A673 (cell line): ENCODE measurements at regions of chr17 and their contacts with region 1.

Region 1: DNA sequence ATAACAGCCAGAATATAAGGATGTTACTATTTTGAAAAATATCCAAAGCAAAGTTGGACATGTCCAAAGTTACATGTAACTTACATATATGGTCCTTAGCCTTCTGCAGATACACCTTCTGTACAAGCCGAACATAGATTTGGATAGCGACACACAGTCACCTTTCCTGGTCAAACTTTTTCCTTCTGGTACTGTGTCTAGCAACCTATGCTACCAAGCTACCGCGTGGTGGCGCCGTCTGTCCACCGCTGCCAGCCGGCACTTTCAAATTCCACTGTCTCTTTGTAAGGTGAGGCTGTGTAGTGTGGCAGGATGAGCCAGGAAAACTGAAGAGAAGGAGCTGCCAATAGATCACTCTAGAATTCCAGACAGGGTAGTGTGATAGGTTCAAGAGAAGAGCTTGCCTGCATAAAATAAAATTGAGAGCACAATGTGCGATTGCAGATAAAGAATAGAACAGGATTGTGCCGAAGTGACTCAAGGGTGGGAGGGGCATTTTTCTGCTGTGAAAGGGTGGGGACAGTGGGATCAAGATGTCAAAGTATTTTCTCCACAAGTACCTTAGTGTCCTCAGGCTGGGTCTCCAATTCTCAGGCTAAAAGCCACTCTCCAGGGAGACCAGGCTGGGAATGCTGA is 366.9 kb downstream of the SLC39A11 start:
- DNase-seq: peak; percentile 60
- H3K4me3 ChIP-seq: no peak overlapping the region
- H3K27ac ChIP-seq: no peak overlapping the region
- H3K4me1 ChIP-seq: no peaks in the 10 kb centered on the region
- H3K27me3 ChIP-seq: no peaks in the 10 kb centered on the region
- CTCF ChIP-seq: peak; percentile 89

Region 2: DNA sequence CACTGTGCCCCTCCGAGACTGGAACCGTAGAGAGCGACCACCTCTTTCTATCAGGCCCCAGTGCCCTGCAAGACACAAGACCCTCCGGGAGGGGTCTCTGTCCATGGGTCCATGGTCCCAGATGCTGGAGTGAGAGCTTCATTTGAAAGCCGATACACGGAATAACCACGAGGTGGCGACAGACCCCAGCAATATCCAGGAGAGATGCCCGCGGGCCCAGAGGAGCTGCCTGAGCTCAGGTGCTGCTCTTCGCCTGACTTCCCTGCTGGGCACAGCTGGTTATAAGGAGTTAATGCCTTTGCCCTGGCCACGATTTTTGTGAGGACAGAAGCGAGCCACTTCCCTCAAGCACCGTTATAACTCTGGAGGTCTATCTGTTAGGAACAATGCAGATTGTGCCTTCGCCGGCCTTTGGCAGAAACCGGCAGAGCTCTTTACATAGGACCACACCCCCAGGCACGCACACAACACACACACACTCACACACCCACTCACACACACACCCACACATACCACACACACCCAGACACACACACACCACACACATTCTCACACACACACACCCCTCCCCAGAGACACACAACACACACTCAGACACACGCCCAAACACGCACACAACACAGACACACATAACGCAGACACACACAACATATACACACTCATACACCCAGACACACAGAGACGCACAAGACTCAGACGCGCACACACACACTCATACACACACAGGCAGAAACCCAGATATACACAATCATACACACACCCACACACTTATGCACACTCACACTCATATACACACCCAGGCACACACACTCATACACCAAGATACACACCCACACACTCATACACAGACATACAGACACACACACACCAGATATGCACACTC is 168.4 kb before region 1 on chr17:
- CTCF ChIA-PET with region 1: interaction called, 8 read pairs
- POLR2A ChIA-PET with region 1: no interaction called
- intact Hi-C with region 1: loop called (anchors 5 kb)
- DNase-seq: peak; percentile 75
- H3K4me3 ChIP-seq: no peak overlapping the region
- H3K27ac ChIP-seq: no peak overlapping the region
- H3K4me1 ChIP-seq: no peaks in the 10 kb centered on the region
- H3K27me3 ChIP-seq: no peaks in the 10 kb centered on the region
- CTCF ChIP-seq: peak; percentile 93

Region 3: GRCh38 chr17:72872396-72872795 is 146.8 kb after region 1 on chr17:
- CTCF ChIA-PET with region 1: no interaction called
- POLR2A ChIA-PET with region 1: no interaction called
- intact Hi-C with region 1: no loop called
- DNase-seq: no peak
- H3K4me3 ChIP-seq: no peak overlapping the region
- H3K27ac ChIP-seq: no peak overlapping the region
- H3K4me1 ChIP-seq: no peaks in the 10 kb centered on the region
- H3K27me3 ChIP-seq: no peaks in the 10 kb centered on the region
- CTCF ChIP-seq: no peak

Region 4: DNA sequence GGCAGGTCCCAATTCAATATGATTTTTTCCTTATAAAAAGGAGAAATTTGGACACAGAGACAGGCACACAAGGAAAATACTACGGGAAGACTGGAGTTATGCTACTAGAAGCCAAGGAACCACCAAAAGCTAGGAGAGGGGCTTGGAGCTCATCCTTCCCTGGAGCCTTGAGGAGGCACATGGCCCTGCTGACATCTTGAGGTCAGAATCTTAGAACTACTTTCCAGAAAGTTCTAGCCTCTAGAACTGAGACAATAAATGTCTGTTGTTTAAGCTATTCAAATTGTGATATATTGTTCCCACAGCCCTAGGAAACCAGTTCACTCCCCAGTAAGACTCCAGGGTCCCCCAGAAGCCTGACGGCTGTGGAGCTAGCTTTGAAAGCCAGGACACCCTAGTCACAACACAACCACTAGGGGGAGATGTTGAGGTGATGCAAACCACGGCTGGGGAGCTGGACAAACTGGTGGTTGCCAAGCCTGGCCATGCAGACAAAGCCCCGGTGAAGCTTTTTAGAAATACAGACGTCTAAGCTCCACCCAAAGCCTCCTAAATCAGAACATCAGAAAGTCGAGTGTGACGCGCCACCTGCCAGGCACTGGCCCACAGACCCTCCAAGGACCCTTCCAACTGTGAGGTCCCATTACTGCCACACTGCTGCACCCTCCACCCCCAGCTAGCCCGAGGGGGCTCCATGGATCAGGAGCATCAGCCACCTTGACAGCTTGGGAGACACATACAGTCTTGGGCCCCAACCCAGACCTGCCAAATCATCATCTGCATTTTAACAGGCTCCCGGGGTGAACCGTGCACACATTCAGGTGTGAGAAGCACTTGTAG is 260.6 kb after region 1 on chr17:
- CTCF ChIA-PET with region 1: interaction called, 4 read pairs
- POLR2A ChIA-PET with region 1: no interaction called
- intact Hi-C with region 1: loop called (anchors 5 kb)
- DNase-seq: peak; percentile 85
- H3K4me3 ChIP-seq: no peak overlapping the region
- H3K27ac ChIP-seq: no peak overlapping the region
- H3K4me1 ChIP-seq: no peaks in the 10 kb centered on the region
- H3K27me3 ChIP-seq: no peaks in the 10 kb centered on the region
- CTCF ChIP-seq: peak; percentile 93

Region 5: DNA sequence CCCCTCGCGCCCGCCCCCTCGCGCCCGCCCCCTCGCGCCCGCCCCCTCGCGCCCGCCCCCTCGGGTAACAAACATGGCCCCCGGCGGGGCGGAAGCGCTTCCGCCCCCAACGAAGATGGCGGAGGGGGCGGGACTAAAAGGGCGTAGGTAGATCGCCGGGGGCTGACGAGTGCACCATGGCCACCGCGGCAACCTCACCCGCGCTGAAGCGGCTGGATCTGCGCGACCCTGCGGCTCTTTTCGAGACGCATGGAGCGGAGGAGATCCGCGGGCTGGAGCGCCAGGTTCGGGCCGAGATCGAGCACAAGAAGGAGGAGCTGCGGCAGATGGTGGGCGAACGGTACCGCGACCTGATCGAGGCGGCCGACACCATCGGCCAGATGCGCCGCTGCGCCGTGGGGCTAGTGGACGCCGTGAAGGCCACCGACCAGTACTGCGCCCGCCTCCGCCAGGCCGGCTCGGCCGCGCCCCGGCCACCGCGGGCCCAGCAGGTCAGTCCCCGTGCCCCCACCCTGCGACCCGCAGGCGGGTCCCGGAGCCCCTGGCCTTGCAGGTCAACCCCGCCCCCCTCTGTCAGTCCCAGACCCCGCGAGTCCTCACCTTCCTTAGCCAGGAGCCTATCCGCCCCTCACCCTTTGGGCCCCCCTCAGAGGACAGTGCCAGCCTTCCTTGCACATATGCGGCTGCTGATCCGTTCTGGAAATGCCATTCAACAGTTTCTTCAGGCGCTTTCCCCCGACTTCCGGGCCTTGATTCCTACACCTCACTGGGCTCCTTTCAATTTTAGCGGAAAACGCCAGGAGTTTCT is 467.5 kb after region 1 on chr17 and contains the start of gene COG1:
- CTCF ChIA-PET with region 1: interaction called, 13 read pairs
- POLR2A ChIA-PET with region 1: no interaction called
- intact Hi-C with region 1: loop called (anchors 1 kb)
- DNase-seq: peak; percentile 95
- H3K4me3 ChIP-seq: peak within 1 kb of the TSS; percentile 86
- H3K27ac ChIP-seq: peak within 1 kb of the TSS; percentile 87
- H3K4me1 ChIP-seq: peaks cover 3% of the 10 kb centered on the region
- H3K27me3 ChIP-seq: no peaks in the 10 kb centered on the region
- CTCF ChIP-seq: no peak
- total RNA-seq, gene COG1: 32.2 and 36.0 TPM in 2 replicates

Region 6: GRCh38 chr17:73371285-73371684 is 645.7 kb after region 1 on chr17:
- CTCF ChIA-PET with region 1: interaction called, 11 read pairs
- POLR2A ChIA-PET with region 1: no interaction called
- intact Hi-C with region 1: loop called (anchors 2 kb)
- DNase-seq: peak; percentile 60
- H3K4me3 ChIP-seq: no peak overlapping the region
- H3K27ac ChIP-seq: no peak overlapping the region
- H3K4me1 ChIP-seq: no peaks in the 10 kb centered on the region
- H3K27me3 ChIP-seq: no peaks in the 10 kb centered on the region
- CTCF ChIP-seq: no peak